Dendritic cell treated with granulocyte-macrophage colony-stimulating factor and Interleukin-4, amounts not matched to agents 40 ng/mL and 50 ng/mL, for 4 days (primary cell): ENCODE measurements at regions of chr6 and their contacts with region 1.

Region 1: DNA sequence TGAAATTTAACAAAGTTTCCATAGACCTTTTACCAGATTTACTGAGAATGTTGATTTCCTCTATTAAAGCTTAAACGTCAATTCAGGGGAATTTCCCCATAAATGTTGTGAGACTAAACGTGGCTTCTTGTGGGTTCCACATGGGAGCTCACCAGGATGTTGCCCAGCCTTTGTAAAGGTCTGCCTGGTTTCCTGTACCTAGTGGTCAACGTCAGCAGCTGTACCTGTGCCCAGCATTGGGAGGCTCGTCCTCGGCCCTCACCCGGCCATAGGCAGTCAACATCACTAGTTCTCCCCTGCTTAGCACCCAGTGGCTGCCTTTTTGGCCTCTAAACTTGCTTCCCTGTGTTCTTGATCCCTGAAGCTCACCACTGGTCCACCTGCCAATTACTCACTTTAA is 22.1 kb upstream of the CD83 start:
- H3K4me3 Mint-ChIP-seq: no peak overlapping the region
- H3K27ac Mint-ChIP-seq: peak overlapping the region; percentile 83
- H3K4me1 Mint-ChIP-seq: peaks cover 77% of the 10 kb centered on the region
- H3K27me3 Mint-ChIP-seq: no peaks in the 10 kb centered on the region

Region 2: GRCh38 chr6:14108571-14109410 is 13.4 kb after region 1 on chr6:
- intact Hi-C with region 1: loop called (anchors 2 kb)
- H3K4me3 Mint-ChIP-seq: peak overlapping the region; percentile 53
- H3K27ac Mint-ChIP-seq: peak overlapping the region; percentile 86
- H3K4me1 Mint-ChIP-seq: peaks cover 35% of the 10 kb centered on the region
- H3K27me3 Mint-ChIP-seq: peaks cover 8% of the 10 kb centered on the region

Region 3: DNA sequence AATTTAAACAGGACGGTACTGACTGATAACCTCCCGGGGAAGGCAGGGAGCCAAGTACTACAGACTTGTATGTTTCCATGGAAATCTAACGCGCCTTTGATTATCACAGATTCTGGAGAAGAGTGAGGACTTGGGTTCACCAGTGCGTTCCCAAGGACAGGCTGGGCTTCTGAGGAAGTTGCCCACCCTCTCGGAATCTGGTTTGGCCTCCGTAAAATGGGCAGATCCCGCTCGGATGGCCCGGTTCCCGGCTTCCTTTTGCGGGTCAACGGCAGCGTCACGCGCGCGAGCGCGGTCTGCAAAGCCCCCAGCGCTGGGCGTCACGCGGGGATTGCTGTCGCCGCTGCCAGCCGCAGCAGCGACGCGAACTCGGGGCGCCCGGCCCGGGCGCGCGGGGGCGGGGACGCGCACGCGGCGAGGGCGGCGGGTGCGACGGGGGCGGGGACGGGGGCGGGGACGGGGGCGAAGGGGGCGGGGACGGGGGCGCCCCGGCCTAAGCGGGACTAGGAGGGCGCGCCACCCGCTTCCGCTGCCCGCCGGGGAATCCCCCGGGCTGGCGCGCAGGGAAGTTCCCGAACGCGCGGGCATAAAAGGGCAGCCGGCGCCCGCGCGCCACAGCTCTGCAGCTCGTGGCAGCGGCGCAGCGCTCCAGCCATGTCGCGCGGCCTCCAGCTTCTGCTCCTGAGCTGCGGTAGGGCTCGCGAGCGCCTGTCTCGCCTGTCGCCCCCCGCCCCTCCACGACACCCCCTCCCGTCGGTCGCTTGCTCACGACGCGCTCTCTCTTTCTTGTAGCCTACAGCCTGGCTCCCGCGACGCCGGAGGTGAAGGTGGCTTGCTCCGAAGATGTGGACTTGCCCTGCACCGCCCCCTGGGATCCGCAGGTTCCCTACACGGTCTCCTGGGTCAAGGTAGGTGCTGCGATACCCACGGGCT is 22.0 kb after region 1 on chr6 and contains the start of gene CD83:
- intact Hi-C with region 1: loop called (anchors 1 kb)
- H3K4me3 Mint-ChIP-seq: peak within 1 kb of the TSS; percentile 95
- H3K27ac Mint-ChIP-seq: peak within 1 kb of the TSS; percentile 95
- H3K4me1 Mint-ChIP-seq: peaks cover 36% of the 10 kb centered on the region
- H3K27me3 Mint-ChIP-seq: no peaks in the 10 kb centered on the region